Sigmoid colon (tissue), 7 donors: ENCODE measurements at regions of chr14 and their contacts with region 1.

Region 1: GRCh38 chr14:26415618-26416123 is 182.2 kb downstream of the NOVA1 start:
- DNase-seq: peak; percentile 94
- H3K4me3 ChIP-seq: no peak overlapping the region
- H3K27ac ChIP-seq: peak overlapping the region in 3 of 4 donors; percentile 47 to 67 (median 63)
- H3K4me1 ChIP-seq: peaks cover 0 to 43% (median 9%) of the 10 kb centered on the region in 4 donors
- H3K27me3 ChIP-seq: no peaks in the 10 kb centered on the region
- CTCF ChIP-seq: no peak
- EP300 ChIP-seq: peak; percentile 47 to 88 (median 64)
- POLR2A ChIP-seq: no peak

Region 2: DNA sequence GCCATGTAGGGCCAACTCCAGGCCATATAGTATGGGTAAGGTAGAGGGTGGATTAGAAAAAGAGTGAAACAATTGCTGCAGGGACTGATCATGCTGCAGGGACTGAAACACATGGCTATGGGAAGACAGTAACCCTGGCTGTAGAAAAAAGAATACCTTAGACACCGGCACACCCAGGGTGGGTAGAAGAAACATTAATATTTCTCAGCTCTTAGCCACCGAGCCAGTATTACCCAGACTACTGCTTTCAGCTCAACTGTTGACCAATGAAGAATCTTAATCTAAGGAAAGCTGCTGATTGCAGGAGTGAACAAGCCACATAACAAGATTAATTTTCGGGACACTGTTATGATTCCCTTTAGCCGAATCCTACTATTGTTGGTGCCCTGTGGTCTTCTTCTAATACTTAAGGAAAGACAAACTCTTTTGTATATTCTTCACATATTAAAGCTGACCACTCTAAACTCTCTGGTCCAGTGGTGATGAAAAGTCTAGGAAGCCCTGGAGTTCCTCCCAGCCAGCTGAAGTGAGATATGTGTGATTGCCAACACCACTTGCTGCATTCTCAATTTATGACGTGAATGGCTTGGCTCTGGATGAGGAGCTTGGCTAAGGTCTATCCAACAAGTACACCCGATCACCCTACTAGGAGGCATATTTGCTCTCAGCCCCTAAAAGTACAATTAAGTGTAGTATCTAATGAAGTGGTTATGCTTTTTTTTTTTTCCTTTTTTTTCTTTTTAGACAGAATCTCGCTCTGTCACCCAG is 112.9 kb after region 1 on chr14:
- intact Hi-C with region 1: loop called (anchors 10 kb)
- DNase-seq: peak; percentile 88
- H3K4me3 ChIP-seq: no peak overlapping the region
- H3K27ac ChIP-seq: peak overlapping the region in 3 of 4 donors; percentile 36 to 70 (median 50)
- H3K4me1 ChIP-seq: peaks cover 0 to 45% (median 24%) of the 10 kb centered on the region in 4 donors
- H3K27me3 ChIP-seq: no peaks in the 10 kb centered on the region
- CTCF ChIP-seq: no peak
- EP300 ChIP-seq: no peak
- POLR2A ChIP-seq: no peak